Activated CD8-positive, alpha-beta T cell treated with anti-CD3 and anti-CD28 coated beads for 36 hours (primary cell): ENCODE measurements at regions of chr16 and their contacts with region 1.

Region 1: GRCh38 chr16:4271176-4272066 is 1.4 kb downstream of the TFAP4 start:
- DNase-seq: peak; percentile 96
- ATAC-seq: peak; percentile 81
- H3K4me3 Mint-ChIP-seq: peak overlapping the region; percentile 86
- H3K27ac Mint-ChIP-seq: peak overlapping the region; percentile 96
- H3K4me1 Mint-ChIP-seq: peaks cover 13% of the 10 kb centered on the region
- H3K27me3 Mint-ChIP-seq: no peaks in the 10 kb centered on the region
- CTCF ChIP-seq: no peak

Region 2: DNA sequence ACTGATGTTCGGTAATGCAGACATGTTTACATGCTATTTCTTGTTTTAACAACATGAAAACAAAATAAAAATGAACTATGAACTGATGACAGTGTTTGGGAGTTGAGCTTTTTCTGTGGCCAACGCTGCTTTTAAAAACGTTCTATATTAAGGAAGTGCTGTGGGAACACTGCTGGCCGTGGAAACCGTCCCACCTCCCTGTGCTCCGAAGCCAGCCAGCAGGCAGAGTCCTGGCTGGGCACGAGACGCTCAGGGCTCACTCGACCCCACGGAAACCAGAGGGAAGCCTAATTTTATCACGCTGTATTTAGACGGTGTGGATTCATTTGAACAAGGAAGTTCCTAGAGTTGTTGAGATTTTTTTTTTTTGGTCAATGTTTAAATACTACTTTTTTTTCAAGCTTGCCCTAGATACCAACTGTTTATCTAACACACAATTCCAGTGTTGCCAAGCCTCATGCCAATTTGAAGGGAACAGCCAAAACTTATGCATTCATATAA is 181.0 kb before region 1 on chr16:
- CTCF ChIA-PET with region 1: no interaction called
- POLR2A ChIA-PET with region 1: no interaction called
- intact Hi-C with region 1: no loop called
- DNase-seq: no peak
- ATAC-seq: no peak
- H3K4me3 Mint-ChIP-seq: no peak overlapping the region
- H3K27ac Mint-ChIP-seq: no peak overlapping the region
- H3K4me1 Mint-ChIP-seq: peaks cover 6% of the 10 kb centered on the region
- H3K27me3 Mint-ChIP-seq: peaks cover 4% of the 10 kb centered on the region
- CTCF ChIP-seq: no peak

Region 3: DNA sequence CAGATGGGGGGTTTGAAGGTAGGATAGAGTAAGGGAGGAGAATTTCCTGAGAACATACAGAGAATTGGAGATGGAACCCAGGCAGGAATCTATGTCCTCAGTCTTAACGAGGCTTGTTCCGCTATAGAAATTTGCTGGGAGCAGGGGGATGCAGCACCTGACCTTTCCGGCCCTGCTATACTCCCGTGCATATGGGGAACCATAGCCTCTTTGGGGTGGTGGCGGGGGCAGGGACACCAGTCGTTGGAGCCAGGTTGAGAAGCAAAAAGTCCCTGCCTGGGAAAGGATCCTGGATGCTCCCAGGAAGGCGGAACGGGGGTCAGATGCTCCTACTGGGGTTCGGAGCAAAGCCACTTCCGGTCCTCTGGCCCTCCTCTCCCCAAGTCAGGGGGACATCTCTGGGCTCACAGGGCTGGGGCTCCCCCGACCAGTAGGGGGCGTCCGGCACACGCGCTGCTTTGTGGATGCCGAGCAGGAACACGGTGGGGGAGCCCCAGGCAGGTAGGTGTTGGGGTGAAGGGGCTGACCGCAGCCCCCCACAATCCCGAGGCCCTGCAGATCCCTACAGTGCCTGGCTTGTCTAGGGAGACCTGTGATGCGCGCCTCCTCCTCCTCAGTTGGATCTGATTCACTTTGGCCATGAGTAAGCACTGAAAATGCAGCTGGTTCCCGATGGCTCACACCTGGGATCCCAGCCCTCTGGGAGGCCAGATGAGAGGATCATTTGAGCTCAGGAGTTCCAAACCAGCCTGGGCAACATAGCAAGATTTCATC is 16.9 kb after region 1 on chr16:
- CTCF ChIA-PET with region 1: interaction called, 18 read pairs
- POLR2A ChIA-PET with region 1: interaction called, 6 read pairs
- intact Hi-C with region 1: no loop called
- DNase-seq: peak; percentile 87
- ATAC-seq: peak; percentile 97
- H3K4me3 Mint-ChIP-seq: no peak overlapping the region
- H3K27ac Mint-ChIP-seq: no peak overlapping the region
- H3K4me1 Mint-ChIP-seq: peaks cover 9% of the 10 kb centered on the region
- H3K27me3 Mint-ChIP-seq: peaks cover 16% of the 10 kb centered on the region
- CTCF ChIP-seq: peak; percentile 99

Region 4: GRCh38 chr16:4307215-4308037 is 36.0 kb after region 1 on chr16:
- CTCF ChIA-PET with region 1: interaction called, 5 read pairs
- POLR2A ChIA-PET with region 1: interaction called, 12 read pairs
- intact Hi-C with region 1: no loop called
- DNase-seq: peak; percentile 97
- ATAC-seq: peak; percentile 94
- H3K4me3 Mint-ChIP-seq: peak overlapping the region; percentile 84
- H3K27ac Mint-ChIP-seq: peak overlapping the region; percentile 96
- H3K4me1 Mint-ChIP-seq: peaks cover 29% of the 10 kb centered on the region
- H3K27me3 Mint-ChIP-seq: no peaks in the 10 kb centered on the region
- CTCF ChIP-seq: no peak

Region 5: GRCh38 chr16:4330277-4330874 is 59.0 kb after region 1 on chr16:
- CTCF ChIA-PET with region 1: interaction called, 18 read pairs
- POLR2A ChIA-PET with region 1: interaction called, 5 read pairs
- intact Hi-C with region 1: no loop called
- DNase-seq: peak; percentile 83
- ATAC-seq: peak; percentile 80
- H3K4me3 Mint-ChIP-seq: no peak overlapping the region
- H3K27ac Mint-ChIP-seq: no peak overlapping the region
- H3K4me1 Mint-ChIP-seq: peaks cover 4% of the 10 kb centered on the region
- H3K27me3 Mint-ChIP-seq: no peaks in the 10 kb centered on the region
- CTCF ChIP-seq: peak; percentile 97

Region 6: DNA sequence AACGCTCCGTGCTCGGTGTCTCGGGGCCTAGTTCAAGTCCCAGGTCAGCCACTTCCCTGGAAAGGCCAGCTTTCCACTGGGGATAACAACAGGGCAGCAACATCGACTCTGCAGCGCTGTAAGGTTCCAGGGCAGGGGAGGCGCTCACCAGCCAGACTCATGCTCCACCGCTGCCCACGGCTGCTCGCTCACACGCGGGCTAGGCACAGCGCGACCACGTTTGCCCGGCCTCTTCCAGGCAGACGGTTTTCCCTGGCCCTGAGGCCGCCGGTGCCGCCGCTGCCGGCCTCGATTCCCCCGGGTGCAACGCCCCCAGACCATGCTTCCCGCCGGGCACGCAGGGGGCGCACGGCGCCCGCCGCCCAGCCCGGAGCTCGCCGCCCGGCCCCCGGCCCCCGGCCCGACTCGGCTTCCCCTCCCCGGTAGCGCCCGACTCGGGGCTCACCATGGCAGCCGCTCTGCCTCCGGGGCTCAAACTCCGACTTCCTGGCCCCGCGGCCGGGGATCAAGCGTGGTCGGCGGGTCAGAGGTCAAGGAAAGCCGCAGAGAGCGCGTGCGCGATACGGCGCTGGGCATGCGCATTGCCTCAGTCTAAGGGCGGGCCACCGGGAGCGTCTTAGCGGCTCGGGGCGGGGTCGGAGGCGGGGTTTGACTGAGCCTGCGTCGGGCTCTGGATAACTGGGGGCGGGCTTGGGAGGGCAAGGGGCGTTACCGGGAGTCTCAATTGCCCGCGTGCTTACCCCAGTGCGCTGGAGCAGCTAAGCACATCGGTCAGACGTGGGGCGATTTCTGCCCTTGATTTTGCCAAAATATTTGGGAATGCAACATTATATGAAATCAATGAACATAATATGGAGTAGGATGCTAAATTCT is 79.6 kb after region 1 on chr16 and contains the start of gene PAM16:
- CTCF ChIA-PET with region 1: interaction called, 14 read pairs
- POLR2A ChIA-PET with region 1: interaction called, 8 read pairs
- intact Hi-C with region 1: no loop called
- DNase-seq: peak; percentile 99
- ATAC-seq: peak; percentile 95
- H3K4me3 Mint-ChIP-seq: peak within 1 kb of the TSS; percentile 96
- H3K27ac Mint-ChIP-seq: peak within 1 kb of the TSS; percentile 95
- H3K4me1 Mint-ChIP-seq: peaks cover 29% of the 10 kb centered on the region
- H3K27me3 Mint-ChIP-seq: no peaks in the 10 kb centered on the region
- CTCF ChIP-seq: no peak
- total RNA-seq, gene PAM16: 65.9 to 70.1 TPM

Region 7: GRCh38 chr16:4416200-4417032 is 145.0 kb after region 1 on chr16 and contains the start of gene CORO7:
- CTCF ChIA-PET with region 1: interaction called, 3 read pairs
- POLR2A ChIA-PET with region 1: interaction called, 11 read pairs
- intact Hi-C with region 1: no loop called
- DNase-seq: peak; percentile 97
- ATAC-seq: peak; percentile 77
- H3K4me3 Mint-ChIP-seq: peak within 1 kb of the TSS; percentile 84
- H3K27ac Mint-ChIP-seq: peak within 1 kb of the TSS; percentile 90
- H3K4me1 Mint-ChIP-seq: peaks cover 31% of the 10 kb centered on the region
- H3K27me3 Mint-ChIP-seq: no peaks in the 10 kb centered on the region
- CTCF ChIP-seq: no peak
- total RNA-seq, gene CORO7: 73.3 to 76.6 TPM